PC-3 (cell line): ENCODE measurements at regions of chr21 and their contacts with region 1.

Region 1: GRCh38 chr21:14589855-14590563 is 43.9 kb upstream of the SAMSN1 start:
- DNase-seq: no peak
- ATAC-seq: no peak
- H3K4me3 ChIP-seq: no peak overlapping the region
- H3K27ac ChIP-seq: no peak overlapping the region
- H3K4me1 ChIP-seq: no peaks in the 10 kb centered on the region
- H3K27me3 ChIP-seq: no peaks in the 10 kb centered on the region
- CTCF ChIP-seq: no peak

Region 2: GRCh38 chr21:14454016-14455009 is 135.7 kb before region 1 on chr21:
- CTCF ChIA-PET with region 1: no interaction called
- POLR2A ChIA-PET with region 1: no interaction called
- intact Hi-C with region 1: loop called (anchors 10 kb)
- DNase-seq: no peak
- ATAC-seq: no peak
- H3K4me3 ChIP-seq: no peak overlapping the region
- H3K27ac ChIP-seq: no peak overlapping the region
- H3K4me1 ChIP-seq: no peaks in the 10 kb centered on the region
- H3K27me3 ChIP-seq: peaks cover 50% of the 10 kb centered on the region; the same call in 1 of the 2 replicates
- CTCF ChIP-seq: no peak